ENCODE measurements at regions of chr6 and their contacts with region 1.

Region 1: GRCh38 chr6:136643850-136644596 is 93.8 kb upstream of the MAP7 start:
- DNase-seq: peak; percentile 90
- ATAC-seq: peak; percentile 41
- H3K4me3 Mint-ChIP-seq: no peak overlapping the region
- H3K27ac Mint-ChIP-seq: no peak overlapping the region
- H3K4me1 Mint-ChIP-seq: no peaks in the 10 kb centered on the region
- H3K27me3 Mint-ChIP-seq: no peaks in the 10 kb centered on the region
- CTCF ChIP-seq: peak; percentile 95

Region 2: DNA sequence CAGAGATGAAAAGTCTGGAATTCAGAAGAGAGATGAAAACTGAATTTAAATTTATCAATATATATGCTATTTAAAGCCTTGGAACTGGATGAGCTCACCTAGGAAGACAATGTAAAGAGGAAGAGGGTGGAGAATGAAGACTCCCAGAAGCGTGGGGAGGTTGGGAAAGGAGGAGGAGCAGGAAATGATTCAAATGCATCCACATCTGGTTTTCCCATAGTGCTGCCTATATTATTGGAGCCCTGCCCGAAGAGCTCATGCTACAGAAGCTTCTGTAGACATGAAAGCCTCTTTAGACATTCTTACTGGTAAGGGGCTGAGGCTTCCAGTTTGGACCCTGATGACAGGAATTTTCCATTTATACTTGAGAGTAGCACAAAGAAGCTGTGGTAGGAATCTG is 773.3 kb before region 1 on chr6:
- CTCF ChIA-PET with region 1: no interaction called
- POLR2A ChIA-PET with region 1: no interaction called
- intact Hi-C with region 1: no loop called
- DNase-seq: no peak
- ATAC-seq: no peak
- H3K4me3 Mint-ChIP-seq: no peak overlapping the region
- H3K27ac Mint-ChIP-seq: no peak overlapping the region
- H3K4me1 Mint-ChIP-seq: peaks cover 18% of the 10 kb centered on the region
- H3K27me3 Mint-ChIP-seq: no peaks in the 10 kb centered on the region
- CTCF ChIP-seq: no peak

Region 3: DNA sequence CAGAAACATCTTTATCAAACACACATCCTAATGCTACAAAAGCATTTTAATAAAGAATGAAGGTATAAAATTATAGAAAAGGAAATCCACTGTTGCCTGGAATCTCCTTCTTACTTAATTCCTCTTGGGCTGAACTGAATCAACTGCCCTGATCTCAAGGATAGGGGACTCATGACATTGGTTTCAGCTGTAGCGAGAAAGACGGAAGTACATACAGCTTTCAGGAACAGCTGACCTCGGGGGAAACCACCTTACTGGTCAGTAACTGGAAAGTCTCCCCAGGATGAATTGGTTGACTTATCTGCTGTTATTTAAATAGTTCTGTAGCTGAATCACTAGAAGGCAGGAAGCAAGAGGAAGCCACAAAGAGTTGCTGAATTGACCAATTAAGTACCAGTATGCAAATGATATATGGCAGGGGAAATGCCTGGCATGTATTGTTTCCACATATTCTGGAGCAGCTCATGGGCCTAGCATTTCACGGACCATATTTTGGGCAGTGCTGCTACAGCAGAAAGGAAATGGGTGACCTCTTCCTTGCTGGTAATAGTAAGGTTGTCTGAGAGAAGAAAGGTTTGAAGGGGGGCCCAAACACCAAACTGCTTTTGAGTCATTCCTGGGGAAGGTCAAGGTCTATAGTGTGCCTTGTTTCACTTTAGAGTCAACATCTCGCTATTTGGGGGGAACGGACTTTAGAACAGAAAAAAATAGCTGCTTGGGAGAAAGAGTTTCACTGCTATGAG is 50.1 kb before region 1 on chr6:
- CTCF ChIA-PET with region 1: interaction called, 12 read pairs
- POLR2A ChIA-PET with region 1: no interaction called
- intact Hi-C with region 1: no loop called
- DNase-seq: peak; percentile 78
- ATAC-seq: peak; percentile 92
- H3K4me3 Mint-ChIP-seq: peak overlapping the region; percentile 56
- H3K27ac Mint-ChIP-seq: peak overlapping the region; percentile 92
- H3K4me1 Mint-ChIP-seq: peaks cover 24% of the 10 kb centered on the region
- H3K27me3 Mint-ChIP-seq: no peaks in the 10 kb centered on the region
- CTCF ChIP-seq: no peak

Region 4: DNA sequence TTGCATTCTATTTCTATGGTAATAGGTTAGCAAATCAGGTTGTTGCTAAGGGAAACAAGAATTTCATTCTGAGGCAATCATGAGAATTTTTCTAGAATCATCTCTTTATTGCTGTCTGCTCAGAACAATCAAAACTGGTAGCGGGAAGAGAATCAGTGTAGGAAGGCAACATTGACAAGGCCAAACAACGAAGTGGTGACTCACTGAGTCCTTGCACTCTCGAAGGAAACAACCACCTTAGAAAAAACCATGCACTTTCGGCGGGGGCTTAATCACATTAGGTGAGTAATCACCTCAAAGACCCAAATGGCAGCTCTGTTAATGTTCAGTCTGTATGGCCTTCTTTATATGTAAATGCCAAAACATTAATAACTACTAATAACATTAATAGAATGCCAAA is 15.0 kb before region 1 on chr6:
- CTCF ChIA-PET with region 1: interaction called, 34 read pairs
- POLR2A ChIA-PET with region 1: no interaction called
- intact Hi-C with region 1: no loop called
- DNase-seq: no peak
- ATAC-seq: peak; percentile 42
- H3K4me3 Mint-ChIP-seq: no peak overlapping the region
- H3K27ac Mint-ChIP-seq: no peak overlapping the region
- H3K4me1 Mint-ChIP-seq: peaks cover 10% of the 10 kb centered on the region
- H3K27me3 Mint-ChIP-seq: no peaks in the 10 kb centered on the region
- CTCF ChIP-seq: no peak

Region 5: GRCh38 chr6:136701045-136701444 is 57.0 kb after region 1 on chr6:
- CTCF ChIA-PET with region 1: interaction called, 10 read pairs
- POLR2A ChIA-PET with region 1: no interaction called
- intact Hi-C with region 1: no loop called
- DNase-seq: no peak
- ATAC-seq: no peak
- H3K4me3 Mint-ChIP-seq: no peak overlapping the region
- H3K27ac Mint-ChIP-seq: no peak overlapping the region
- H3K4me1 Mint-ChIP-seq: peaks cover 17% of the 10 kb centered on the region
- H3K27me3 Mint-ChIP-seq: no peaks in the 10 kb centered on the region
- CTCF ChIP-seq: no peak

Region 6: GRCh38 chr6:136751522-136751956 is 107.5 kb after region 1 on chr6:
- CTCF ChIA-PET with region 1: interaction called, 18 read pairs
- POLR2A ChIA-PET with region 1: no interaction called
- intact Hi-C with region 1: no loop called
- DNase-seq: peak; percentile 66
- ATAC-seq: peak; percentile 79
- H3K4me3 Mint-ChIP-seq: peak overlapping the region; percentile 18
- H3K27ac Mint-ChIP-seq: peak overlapping the region; percentile 62
- H3K4me1 Mint-ChIP-seq: peaks cover 58% of the 10 kb centered on the region
- H3K27me3 Mint-ChIP-seq: no peaks in the 10 kb centered on the region
- CTCF ChIP-seq: no peak

Region 7: GRCh38 chr6:136792410-136793262 is 148.6 kb after region 1 on chr6 and contains the start of gene MAP3K5:
- CTCF ChIA-PET with region 1: interaction called, 370 read pairs
- POLR2A ChIA-PET with region 1: interaction called, 29 read pairs
- intact Hi-C with region 1: loop called (anchors 1 kb)
- DNase-seq: peak; percentile 96
- ATAC-seq: peak; percentile 79
- H3K4me3 Mint-ChIP-seq: peak within 1 kb of the TSS; percentile 83
- H3K27ac Mint-ChIP-seq: peak within 1 kb of the TSS; percentile 96
- H3K4me1 Mint-ChIP-seq: peaks cover 34% of the 10 kb centered on the region
- H3K27me3 Mint-ChIP-seq: no peaks in the 10 kb centered on the region
- CTCF ChIP-seq: peak; percentile 69
- total RNA-seq, gene MAP3K5: 4.4 to 4.6 TPM